WTC11 (cell line): ENCODE measurements at regions of chr11 and their contacts with region 1.

Region 1: GRCh38 chr11:65859200-65859811 is 927 bp upstream of the MUS81 start:
- DNase-seq: peak; percentile 100
- ATAC-seq: peak; percentile 67
- H3K4me3 Mint-ChIP-seq: peak overlapping the region; percentile 90
- H3K27ac Mint-ChIP-seq: peak overlapping the region; percentile 100
- H3K4me1 Mint-ChIP-seq: peaks cover 23% of the 10 kb centered on the region
- H3K27me3 Mint-ChIP-seq: no peaks in the 10 kb centered on the region
- CTCF ChIP-seq: no peak

Region 2: DNA sequence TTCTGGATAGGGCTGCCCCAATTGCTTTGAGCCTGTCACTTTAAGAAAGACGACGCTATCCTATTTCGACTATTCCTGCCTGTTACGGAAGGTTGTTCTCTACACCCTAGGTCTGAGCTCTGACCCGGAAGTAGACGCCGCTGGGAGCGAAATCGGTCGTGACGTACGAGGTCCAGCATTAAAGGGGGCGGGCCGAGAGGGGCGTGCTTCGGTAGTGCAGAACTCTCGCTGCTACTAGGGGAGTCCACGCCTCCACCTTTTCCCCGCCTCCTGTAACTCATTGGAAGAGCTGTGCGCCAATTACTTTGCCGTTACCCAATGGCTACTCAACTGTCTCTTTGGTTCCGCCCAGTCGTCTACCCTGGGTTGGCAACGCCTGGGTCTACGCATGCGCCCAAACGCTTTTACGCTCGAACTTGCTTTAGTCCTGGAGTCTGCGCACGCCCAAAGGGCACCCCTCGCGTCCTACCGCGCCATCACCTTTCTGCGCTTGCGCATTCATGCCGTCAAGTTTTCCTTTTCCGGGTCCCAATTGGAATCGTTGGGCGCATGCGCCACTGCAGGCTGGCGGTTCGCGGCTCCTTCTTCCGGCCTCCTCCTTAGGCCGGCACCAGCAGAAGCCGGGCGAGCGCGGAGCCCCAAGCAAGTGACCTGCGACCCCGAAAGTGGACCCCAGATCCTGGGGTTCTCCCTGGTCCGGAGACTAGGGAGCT is 243.9 kb before region 1 on chr11 and contains the start of gene PCNX3:
- CTCF ChIA-PET with region 1: interaction called, 14 read pairs
- POLR2A ChIA-PET with region 1: interaction called, 4 read pairs
- DNase-seq: peak; percentile 100
- ATAC-seq: peak; percentile 91
- H3K4me3 Mint-ChIP-seq: peak within 1 kb of the TSS; percentile 94
- H3K27ac Mint-ChIP-seq: peak within 1 kb of the TSS; percentile 98
- H3K4me1 Mint-ChIP-seq: peaks cover 21% of the 10 kb centered on the region
- H3K27me3 Mint-ChIP-seq: no peaks in the 10 kb centered on the region; the same call in 1 of the 2 replicates
- CTCF ChIP-seq: no peak
- total RNA-seq, gene PCNX3: 44.6 to 51.6 TPM (median 45.8 TPM) in 3 replicates

Region 3: GRCh38 chr11:65720237-65720934 is 138.9 kb before region 1 on chr11 and contains the start of gene RNASEH2C:
- CTCF ChIA-PET with region 1: interaction called, 13 read pairs
- POLR2A ChIA-PET with region 1: interaction called, 5 read pairs
- DNase-seq: peak; percentile 82
- ATAC-seq: peak; percentile 87
- H3K4me3 Mint-ChIP-seq: peak within 1 kb of the TSS; percentile 98
- H3K27ac Mint-ChIP-seq: peak within 1 kb of the TSS; percentile 63; the same call in 1 of the 2 replicates
- H3K4me1 Mint-ChIP-seq: peaks cover 9% of the 10 kb centered on the region
- H3K27me3 Mint-ChIP-seq: peaks cover 4% of the 10 kb centered on the region; the same call in 1 of the 2 replicates
- CTCF ChIP-seq: no peak
- total RNA-seq, gene RNASEH2C: 42.1 to 53.0 TPM (median 52.2 TPM) in 3 replicates

Region 4: GRCh38 chr11:65764434-65764833 is 94.9 kb before region 1 on chr11:
- CTCF ChIA-PET with region 1: no interaction called
- POLR2A ChIA-PET with region 1: no interaction called
- DNase-seq: no peak
- ATAC-seq: no peak
- H3K4me3 Mint-ChIP-seq: no peak overlapping the region
- H3K27ac Mint-ChIP-seq: no peak overlapping the region
- H3K4me1 Mint-ChIP-seq: no peaks in the 10 kb centered on the region
- H3K27me3 Mint-ChIP-seq: peaks cover 16% of the 10 kb centered on the region
- CTCF ChIP-seq: no peak

Region 5: DNA sequence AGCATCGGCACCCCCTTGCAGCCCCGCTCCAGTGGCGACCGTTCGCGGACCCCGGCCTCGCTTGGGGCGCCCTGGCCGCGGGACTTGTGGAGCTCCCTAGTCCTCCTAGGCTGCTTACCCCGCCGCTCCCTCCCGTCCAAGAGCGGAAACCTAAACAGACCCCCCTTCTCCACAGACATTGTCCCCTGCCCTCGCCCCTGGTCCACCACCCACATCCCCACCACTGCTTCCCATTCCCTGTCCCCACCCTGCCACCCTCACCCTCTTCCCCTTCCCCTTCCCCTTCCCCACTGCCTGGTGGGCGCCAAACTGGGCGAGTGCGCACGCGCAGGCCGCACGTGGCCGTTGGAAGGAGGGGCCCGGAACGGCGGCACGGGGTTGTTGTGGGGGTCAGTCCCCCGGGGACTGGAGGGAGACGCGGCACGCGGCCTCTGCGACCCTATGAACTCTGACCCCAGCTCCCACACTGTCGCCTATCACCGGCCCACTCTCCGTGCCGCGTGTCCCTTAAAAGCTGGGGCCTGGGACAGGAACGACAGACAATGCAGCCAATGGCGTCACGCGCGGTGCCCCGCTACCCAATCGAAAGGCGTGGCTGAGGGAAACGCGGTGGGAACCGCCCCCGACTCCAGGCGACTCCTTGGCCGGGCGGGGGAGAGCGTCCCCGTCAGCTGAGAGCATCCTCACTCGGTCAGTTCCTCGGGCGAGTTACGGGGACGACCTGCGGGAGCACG is 25.8 kb before region 1 on chr11 and contains the start of gene SNX32:
- CTCF ChIA-PET with region 1: interaction called, 15 read pairs
- POLR2A ChIA-PET with region 1: interaction called, 16 read pairs
- DNase-seq: peak; percentile 97
- ATAC-seq: peak; percentile 97
- H3K4me3 Mint-ChIP-seq: no peak within 1 kb of the TSS
- H3K27ac Mint-ChIP-seq: no peak within 1 kb of the TSS
- H3K4me1 Mint-ChIP-seq: peaks cover 10% of the 10 kb centered on the region
- H3K27me3 Mint-ChIP-seq: peaks cover 19% of the 10 kb centered on the region
- CTCF ChIP-seq: no peak
- total RNA-seq, gene SNX32: 2.2 to 3.4 TPM (median 2.9 TPM) in 3 replicates

Region 6: DNA sequence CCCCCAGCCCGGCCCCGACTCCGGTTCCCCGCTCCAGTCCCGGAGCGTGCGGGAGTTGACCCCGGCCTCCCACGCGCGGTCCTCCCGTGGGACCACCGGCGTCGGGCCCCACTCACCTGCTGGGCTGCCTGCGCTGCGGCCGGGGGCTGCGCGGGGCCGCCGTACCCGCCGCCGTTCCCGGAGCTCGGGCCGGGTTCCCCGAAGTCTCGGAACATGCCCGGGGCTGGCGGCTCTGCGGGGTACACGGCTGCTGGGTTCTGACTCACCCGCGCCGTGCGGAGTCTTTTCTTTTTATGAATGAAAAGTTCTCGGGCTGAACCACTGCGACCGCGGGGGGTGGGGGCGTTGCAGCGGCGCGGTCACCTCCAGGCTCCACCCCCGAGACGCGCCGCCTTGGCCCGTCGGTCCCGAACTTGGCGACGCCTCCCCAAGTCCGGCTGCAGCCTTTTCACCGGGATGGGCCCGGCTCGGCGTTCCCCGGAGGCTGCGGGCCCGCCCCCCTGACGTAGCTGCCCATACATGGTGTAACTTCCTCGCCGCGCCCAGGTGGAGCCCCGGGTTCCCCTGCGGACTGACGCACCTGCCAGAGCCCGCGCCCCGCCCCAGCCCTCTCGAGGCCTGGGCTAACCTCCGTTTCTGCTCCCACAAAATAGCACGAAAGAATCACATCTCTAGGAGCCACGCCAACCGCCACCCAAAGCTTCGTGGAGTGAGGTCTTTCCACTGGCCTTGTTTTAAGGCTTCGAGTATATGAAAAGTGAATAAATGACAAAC is 41.0 kb after region 1 on chr11 and contains the start of gene FOSL1:
- CTCF ChIA-PET with region 1: interaction called, 12 read pairs
- POLR2A ChIA-PET with region 1: interaction called, 3 read pairs
- DNase-seq: peak; percentile 97
- ATAC-seq: peak; percentile 95
- H3K4me3 Mint-ChIP-seq: peak within 1 kb of the TSS; percentile 72
- H3K27ac Mint-ChIP-seq: 0 out of 2 replicates have a peak within 1 kb of the TSS, but pooled peaks have one; percentile 41
- H3K4me1 Mint-ChIP-seq: 0 out of 2 replicates have a peak, but pooled peaks cover 4% of the 10 kb centered on the region
- H3K27me3 Mint-ChIP-seq: peaks cover 78% of the 10 kb centered on the region
- CTCF ChIP-seq: no peak
- total RNA-seq, gene FOSL1: 16.3 to 20.5 TPM (median 17.1 TPM) in 3 replicates

Region 7: GRCh38 chr11:66001942-66002647 is 142.8 kb after region 1 on chr11 and contains the starts of genes BANF1 and EIF1AD:
- CTCF ChIA-PET with region 1: interaction called, 10 read pairs
- POLR2A ChIA-PET with region 1: no interaction called
- DNase-seq: peak; percentile 92
- ATAC-seq: peak; percentile 93
- H3K4me3 Mint-ChIP-seq: peak within 1 kb of the TSS; percentile 96
- H3K27ac Mint-ChIP-seq: peak within 1 kb of the TSS; percentile 99
- H3K4me1 Mint-ChIP-seq: peaks cover 17% of the 10 kb centered on the region
- H3K27me3 Mint-ChIP-seq: no peaks in the 10 kb centered on the region
- CTCF ChIP-seq: no peak
- total RNA-seq, gene BANF1: 269 to 314 TPM (median 310 TPM) in 3 replicates
- total RNA-seq, gene EIF1AD: 29.7 to 37.6 TPM (median 32.6 TPM) in 3 replicates

Region 8: DNA sequence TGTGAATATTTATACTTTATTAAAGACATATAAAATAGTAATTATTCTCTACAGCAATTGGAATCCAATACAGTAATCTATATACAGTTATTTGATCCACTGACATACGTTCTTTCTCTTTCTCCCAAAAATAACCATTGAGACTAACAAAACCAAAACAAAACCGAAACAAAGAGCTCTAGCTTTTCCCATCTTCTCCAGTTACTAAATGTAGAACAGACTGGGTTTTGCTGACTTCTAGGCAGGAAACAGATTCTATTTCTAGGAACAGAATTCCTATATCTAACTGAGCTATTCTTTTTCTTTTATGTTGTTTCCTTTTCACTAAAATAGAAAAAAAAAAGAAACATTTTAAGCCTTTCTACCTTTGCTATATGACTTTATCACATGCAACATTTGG is 290.8 kb after region 1 on chr11:
- CTCF ChIA-PET with region 1: no interaction called
- POLR2A ChIA-PET with region 1: no interaction called
- DNase-seq: no peak
- ATAC-seq: no peak
- H3K4me3 Mint-ChIP-seq: no peak overlapping the region
- H3K27ac Mint-ChIP-seq: no peak overlapping the region; the same call in 1 of the 2 replicates
- H3K4me1 Mint-ChIP-seq: peaks cover 5% of the 10 kb centered on the region; the same call in 1 of the 2 replicates
- H3K27me3 Mint-ChIP-seq: no peaks in the 10 kb centered on the region
- CTCF ChIP-seq: no peak